Activated CD4-positive, alpha-beta memory T cell treated with anti-CD3 and anti-CD28 coated beads for 36 hours (primary cell): ENCODE measurements at regions of chr7 and their contacts with region 1.

Region 1: DNA sequence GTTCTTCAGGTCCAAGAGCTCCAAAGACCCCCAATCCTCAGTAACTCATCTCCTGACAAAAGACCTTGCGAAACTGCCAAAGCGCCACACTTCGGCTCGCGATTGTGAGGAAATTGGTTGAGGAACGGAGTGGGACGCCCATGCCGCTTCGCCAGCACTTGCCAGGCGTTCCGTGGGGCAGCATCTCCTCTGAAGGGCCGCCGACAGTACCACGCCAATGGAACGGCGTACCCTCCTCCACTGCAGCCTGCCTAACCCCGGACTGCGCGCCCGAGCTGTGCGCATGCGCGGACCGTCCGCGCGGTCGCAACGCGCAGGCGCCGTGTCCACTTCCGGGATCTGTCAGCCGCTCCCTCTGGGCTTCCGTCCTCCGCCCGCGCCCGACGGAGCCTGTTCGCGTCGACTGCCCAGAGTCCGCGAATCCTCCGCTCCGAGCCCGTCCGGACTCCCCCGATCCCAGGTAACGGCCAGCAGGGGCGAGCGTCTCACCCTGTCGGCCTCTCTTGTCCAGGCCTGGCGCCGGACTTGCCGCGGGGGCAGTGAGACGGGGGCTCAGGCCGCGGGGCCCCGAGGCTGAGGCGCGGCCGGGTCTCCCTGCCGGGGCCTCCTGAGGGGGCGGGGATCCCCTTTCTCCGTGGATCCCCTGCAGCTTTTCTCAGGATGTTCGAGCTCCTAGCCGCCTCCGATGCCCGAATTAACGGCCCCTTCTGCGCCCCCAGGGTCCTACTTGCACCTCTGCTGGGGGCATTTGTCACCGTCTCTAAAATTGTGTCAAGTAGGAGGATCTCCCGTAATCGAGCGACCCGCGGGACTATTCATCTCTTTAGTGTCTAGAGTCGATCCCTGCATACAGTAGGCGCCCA is at the start of gene ARPC1A:
- DNase-seq: peak; percentile 94
- H3K4me3 Mint-ChIP-seq: peak within 1 kb of the TSS; percentile 87
- H3K27ac Mint-ChIP-seq: peak within 1 kb of the TSS; percentile 84
- H3K4me1 Mint-ChIP-seq: peaks cover 43% of the 10 kb centered on the region
- H3K27me3 Mint-ChIP-seq: no peaks in the 10 kb centered on the region
- total RNA-seq, gene ARPC1A: 66.9 to 70.0 TPM

Region 2: DNA sequence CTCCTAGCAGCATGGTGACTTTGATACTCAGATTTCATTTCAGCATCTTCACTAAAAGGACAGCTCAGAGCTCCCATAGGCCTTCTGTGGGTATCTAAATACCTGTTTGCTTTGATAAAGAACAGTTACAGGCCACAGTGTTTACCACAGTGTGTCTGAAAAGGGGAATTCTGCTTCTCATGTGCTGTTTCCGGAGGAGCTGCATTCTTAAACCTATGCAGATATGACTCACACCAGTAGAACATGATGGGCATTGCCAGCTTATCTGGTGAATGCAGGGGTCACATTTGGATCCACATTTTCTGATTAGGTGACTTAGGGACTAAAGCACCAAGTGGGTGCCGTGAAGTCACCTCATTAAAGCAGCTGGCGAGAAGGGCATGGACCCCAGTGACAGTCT is 394.9 kb before region 1 on chr7:
- CTCF ChIA-PET with region 1: no interaction called
- POLR2A ChIA-PET with region 1: no interaction called
- intact Hi-C with region 1: loop called (anchors 10 kb)
- DNase-seq: peak; percentile 52
- H3K4me3 Mint-ChIP-seq: peak overlapping the region; percentile 53
- H3K27ac Mint-ChIP-seq: peak overlapping the region; percentile 82
- H3K4me1 Mint-ChIP-seq: peaks cover 20% of the 10 kb centered on the region
- H3K27me3 Mint-ChIP-seq: no peaks in the 10 kb centered on the region

Region 3: DNA sequence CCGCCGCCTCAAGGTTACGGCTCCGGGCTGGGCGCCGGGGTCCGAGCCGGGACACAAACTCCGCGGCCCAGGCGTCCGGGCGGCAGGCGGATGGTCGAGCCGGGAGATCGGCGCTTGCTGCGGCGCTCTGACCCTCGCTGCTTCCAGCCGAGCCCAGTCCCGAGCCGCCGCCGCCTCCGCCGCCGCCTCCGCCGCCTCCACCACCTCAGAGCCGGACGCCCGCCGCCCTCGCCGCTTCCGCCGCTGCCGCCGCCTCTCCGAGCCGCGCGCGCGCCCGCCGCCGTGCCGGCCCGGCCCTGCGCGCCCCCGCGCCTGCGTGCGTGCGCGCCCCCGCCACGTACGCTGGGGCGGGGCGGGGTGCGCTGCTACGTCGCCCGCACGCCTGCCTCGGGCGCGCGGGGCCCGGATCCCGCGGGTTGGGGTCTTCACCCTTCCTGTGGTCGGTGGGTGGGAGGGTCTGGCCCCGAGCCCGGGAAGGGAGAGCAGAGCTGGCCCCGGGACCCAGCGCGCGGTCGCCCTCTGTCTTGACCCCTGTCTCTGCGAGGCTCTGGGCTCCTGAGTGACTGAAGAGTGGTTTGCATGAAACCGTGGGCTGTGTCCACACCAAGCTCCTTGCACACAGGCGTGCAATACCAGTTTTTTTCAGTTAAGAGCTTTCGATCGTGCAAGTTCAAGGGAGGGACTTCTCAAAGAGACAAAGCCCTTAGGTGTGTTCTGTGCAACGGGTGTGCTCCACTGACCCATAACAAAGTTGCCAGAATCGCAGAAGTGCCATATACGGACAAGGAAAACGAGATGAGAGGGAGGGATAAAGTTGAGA is 181.7 kb before region 1 on chr7 and contains the start of gene SMURF1:
- CTCF ChIA-PET with region 1: no interaction called
- POLR2A ChIA-PET with region 1: no interaction called
- intact Hi-C with region 1: loop called (anchors 5 kb)
- DNase-seq: peak; percentile 77
- H3K4me3 Mint-ChIP-seq: peak within 1 kb of the TSS; percentile 89
- H3K27ac Mint-ChIP-seq: peak within 1 kb of the TSS; percentile 83
- H3K4me1 Mint-ChIP-seq: peaks cover 36% of the 10 kb centered on the region
- H3K27me3 Mint-ChIP-seq: peaks cover 2% of the 10 kb centered on the region
- total RNA-seq, gene SMURF1: 14.0 to 16.2 TPM

Region 4: DNA sequence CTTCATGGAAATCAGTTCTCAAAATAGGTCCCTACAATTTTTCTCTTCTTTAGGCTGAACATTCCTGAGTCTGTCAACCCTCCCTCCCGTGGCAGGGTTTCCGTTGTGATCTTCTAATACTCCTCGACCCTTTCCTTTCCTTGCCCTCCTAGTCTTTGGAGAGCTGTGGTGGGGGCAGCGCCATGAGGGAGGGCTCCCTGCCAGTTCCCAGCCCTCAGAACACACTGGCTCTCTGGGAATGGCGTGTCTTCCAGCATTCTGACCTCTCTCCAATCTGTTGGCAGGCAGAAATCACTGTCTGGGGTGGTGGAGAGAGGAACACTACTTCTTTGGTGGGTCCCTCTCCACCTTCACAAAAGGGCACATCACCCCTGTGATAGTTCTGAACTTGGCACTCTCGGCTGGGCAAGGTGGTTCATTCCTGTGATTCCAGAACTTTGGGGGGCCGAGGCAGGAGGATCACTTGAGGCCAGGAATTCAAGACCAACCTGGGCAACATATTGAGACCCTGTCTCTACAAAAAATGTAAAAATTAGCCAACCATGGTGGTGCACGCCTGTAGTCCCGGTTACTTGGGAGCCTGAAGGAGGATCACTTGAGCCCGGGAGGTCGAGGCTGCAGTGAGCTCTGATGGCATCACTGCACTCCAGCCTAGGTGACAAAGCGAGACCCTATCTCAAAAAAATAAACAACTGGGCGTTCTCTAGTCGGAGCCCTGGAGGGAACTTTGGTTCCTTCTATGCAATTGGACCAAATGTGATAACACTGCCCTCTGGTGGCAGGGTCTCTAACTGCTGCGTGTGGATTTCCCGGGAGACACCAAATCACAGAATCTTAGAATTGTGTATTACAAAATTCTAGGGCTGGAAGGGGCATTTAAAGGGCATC is 13.2 kb before region 1 on chr7:
- CTCF ChIA-PET with region 1: interaction called, 6 read pairs
- POLR2A ChIA-PET with region 1: no interaction called
- intact Hi-C with region 1: loop called (anchors 1 kb)
- DNase-seq: peak; percentile 79
- H3K4me3 Mint-ChIP-seq: no peak overlapping the region
- H3K27ac Mint-ChIP-seq: no peak overlapping the region
- H3K4me1 Mint-ChIP-seq: peaks cover 7% of the 10 kb centered on the region
- H3K27me3 Mint-ChIP-seq: peaks cover 9% of the 10 kb centered on the region

Region 5: GRCh38 chr7:99344061-99344647 is 18.4 kb after region 1 on chr7:
- CTCF ChIA-PET with region 1: no interaction called
- POLR2A ChIA-PET with region 1: no interaction called
- intact Hi-C with region 1: no loop called
- DNase-seq: no peak
- H3K4me3 Mint-ChIP-seq: no peak overlapping the region
- H3K27ac Mint-ChIP-seq: peak overlapping the region; percentile 45
- H3K4me1 Mint-ChIP-seq: peaks cover 16% of the 10 kb centered on the region
- H3K27me3 Mint-ChIP-seq: no peaks in the 10 kb centered on the region

Region 6: GRCh38 chr7:99380032-99380822 is 54.5 kb after region 1 on chr7:
- CTCF ChIA-PET with region 1: interaction called, 5 read pairs
- POLR2A ChIA-PET with region 1: interaction called, 3 read pairs
- intact Hi-C with region 1: loop called (anchors 1 kb)
- DNase-seq: peak; percentile 68
- H3K4me3 Mint-ChIP-seq: peak overlapping the region; percentile 81
- H3K27ac Mint-ChIP-seq: peak overlapping the region; percentile 97
- H3K4me1 Mint-ChIP-seq: peaks cover 66% of the 10 kb centered on the region
- H3K27me3 Mint-ChIP-seq: no peaks in the 10 kb centered on the region

Region 7: GRCh38 chr7:99472561-99473243 is 146.9 kb after region 1 on chr7 and contains the start of gene ZNF789:
- CTCF ChIA-PET with region 1: no interaction called
- POLR2A ChIA-PET with region 1: no interaction called
- intact Hi-C with region 1: loop called (anchors 1 kb)
- DNase-seq: peak; percentile 99
- H3K4me3 Mint-ChIP-seq: peak within 1 kb of the TSS; percentile 100
- H3K27ac Mint-ChIP-seq: peak within 1 kb of the TSS; percentile 88
- H3K4me1 Mint-ChIP-seq: peaks cover 33% of the 10 kb centered on the region
- H3K27me3 Mint-ChIP-seq: no peaks in the 10 kb centered on the region
- total RNA-seq, gene ZNF789: 14.2 to 15.6 TPM